K562 (cell line): ENCODE measurements at regions of chr10 and their contacts with region 1.

Region 1: DNA sequence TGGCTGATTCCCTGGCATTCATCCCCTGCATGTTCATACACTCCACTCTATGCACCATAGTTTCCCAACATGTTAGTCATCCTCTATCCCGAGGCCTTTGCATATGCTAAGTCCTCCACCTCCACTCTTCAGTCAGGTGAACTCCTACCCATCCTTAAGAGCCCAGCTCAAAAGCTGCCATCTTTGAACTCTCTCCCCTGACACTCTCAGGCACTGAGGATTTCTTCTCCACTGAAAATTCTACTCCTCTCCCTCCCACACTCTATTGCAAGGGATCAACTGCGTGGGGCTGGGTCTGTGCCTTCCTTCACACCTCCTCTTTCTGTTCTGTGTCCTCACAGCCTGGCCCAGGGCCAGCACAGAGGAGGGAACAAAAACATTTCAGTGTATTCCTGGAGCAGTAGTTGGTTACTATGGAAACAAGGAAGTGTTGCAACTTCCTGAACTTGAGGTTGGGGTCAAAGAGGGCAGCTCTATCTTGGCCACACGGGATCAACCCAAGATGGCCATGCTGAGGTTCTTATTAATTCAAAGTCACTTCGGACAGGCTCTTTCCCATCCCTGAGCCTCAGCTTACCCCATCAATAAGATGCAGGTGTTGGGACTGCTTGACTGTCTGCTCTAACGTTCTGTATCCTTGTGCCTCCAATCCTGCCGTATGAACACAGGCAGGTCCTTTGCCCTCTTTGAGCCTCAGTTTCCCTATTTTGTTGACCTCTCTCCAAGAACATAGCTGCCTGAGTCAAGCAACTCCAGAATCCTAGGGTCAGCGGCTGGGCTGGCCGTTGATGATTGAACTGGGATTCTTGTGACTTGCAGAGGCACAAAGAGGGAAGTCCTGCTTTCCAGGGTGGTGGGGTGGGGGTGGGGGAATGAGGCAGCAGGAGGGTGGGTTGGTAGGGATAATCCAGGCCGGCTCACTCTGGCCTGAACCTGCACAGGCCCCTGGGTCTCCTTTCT is 15.5 kb downstream of the ZMIZ1 start:
- DNase-seq: peak; percentile 74 to 92 (median 81)
- ATAC-seq: peak; percentile 77
- H3K4me3 ChIP-seq: no peak overlapping the region
- H3K27ac ChIP-seq: peak overlapping the region; percentile 18; the same call in 1 of the 3 replicates
- H3K4me1 ChIP-seq: peaks cover 73 to 74% of the 10 kb centered on the region in 2 experiments
- H3K27me3 ChIP-seq: no peaks in the 10 kb centered on the region
- CTCF ChIP-seq: no peak
- EP300 ChIP-seq: peak; percentile 78
- POLR2A ChIP-seq: no peak
- RAD21 ChIP-seq: peak; percentile 17 to 20; a peak in 2 of 4 replicates

Region 2: GRCh38 chr10:79127151-79127961 is 43.1 kb after region 1 on chr10:
- CTCF ChIA-PET with region 1: no interaction called
- POLR2A ChIA-PET with region 1: interaction called, 3 read pairs
- in situ Hi-C with region 1: no loop called
- intact Hi-C with region 1: loop called (anchors 5 kb)
- DNase-seq: peak; percentile 73 to 88 (median 82)
- ATAC-seq: peak; percentile 88
- H3K4me3 ChIP-seq: no peak overlapping the region
- H3K27ac ChIP-seq: peak overlapping the region; percentile 51; the same call in 2 of the 3 replicates
- H3K4me1 ChIP-seq: peaks cover 64 to 79% of the 10 kb centered on the region in 2 experiments
- H3K27me3 ChIP-seq: no peaks in the 10 kb centered on the region
- CTCF ChIP-seq: peak in 2 of 3 experiments; percentile 40 to 44; a peak in 3 of 6 replicates
- EP300 ChIP-seq: peak; percentile 37; the same call in 1 of the 2 replicates
- POLR2A ChIP-seq: no peak
- RAD21 ChIP-seq: peak; percentile 32 to 44

Region 3: DNA sequence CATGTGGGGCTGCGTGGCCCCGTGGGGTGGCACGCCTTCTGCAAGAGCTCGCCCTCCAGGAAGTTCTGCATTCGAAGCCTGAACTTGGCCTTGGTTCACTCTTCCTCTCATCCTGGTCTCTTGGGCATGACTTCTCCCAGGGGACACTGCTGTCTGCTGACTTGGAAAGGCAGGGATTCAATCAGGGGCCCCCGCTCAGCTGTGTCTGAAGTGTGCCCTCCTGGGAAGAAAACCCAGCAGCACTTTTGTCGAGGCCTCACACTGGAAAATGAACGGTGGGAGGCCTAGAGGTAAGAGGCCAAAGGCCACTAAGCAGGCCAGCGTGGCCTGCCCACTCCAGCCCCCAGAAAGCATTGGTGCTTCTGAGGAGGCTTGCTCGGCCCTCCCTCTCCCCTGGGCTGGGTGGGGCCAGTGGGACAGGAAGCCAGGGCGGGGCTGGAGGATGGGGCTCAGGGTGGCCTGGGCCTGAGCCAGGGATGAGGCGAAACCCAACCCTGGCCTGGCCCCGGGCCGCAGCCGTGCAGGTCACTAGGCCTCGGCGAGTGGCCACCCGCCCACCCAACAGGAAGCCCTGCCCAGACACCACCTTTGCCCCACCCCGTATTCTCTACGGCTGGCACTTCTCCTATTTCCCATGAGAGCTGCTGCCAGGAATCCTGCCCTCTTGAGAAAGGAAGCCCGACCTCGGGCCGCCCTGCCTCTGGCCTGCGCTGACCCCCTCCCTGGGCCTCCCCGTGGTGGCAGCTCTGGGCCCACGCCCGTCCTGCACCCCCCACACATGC is 65.6 kb after region 1 on chr10:
- CTCF ChIA-PET with region 1: no interaction called
- POLR2A ChIA-PET with region 1: no interaction called
- in situ Hi-C with region 1: no loop called
- intact Hi-C with region 1: loop called (anchors 5 kb)
- DNase-seq: peak; percentile 92 to 97 (median 94)
- ATAC-seq: peak; percentile 88
- H3K4me3 ChIP-seq: no peak overlapping the region; the same call in 1 of the 2 replicates
- H3K27ac ChIP-seq: peak overlapping the region; percentile 85
- H3K4me1 ChIP-seq: peaks cover 83 to 89% of the 10 kb centered on the region in 2 experiments
- H3K27me3 ChIP-seq: no peaks in the 10 kb centered on the region
- CTCF ChIP-seq: no peak
- EP300 ChIP-seq: peak; percentile 41; the same call in 1 of the 2 replicates
- POLR2A ChIP-seq: peak; percentile 71
- RAD21 ChIP-seq: no peak; a peak in 1 of 4 replicates